CD4-positive, alpha-beta T cell (primary cell): ENCODE measurements at regions of chr11 and their contacts with region 1.

Region 1: GRCh38 chr11:55673860-55674259 is 11.9 kb downstream of the OR4C6 start:
- DNase-seq: no peak
- ATAC-seq: no peak
- H3K4me3 ChIP-seq: no peak overlapping the region
- H3K4me3 Mint-ChIP-seq: no peak overlapping the region
- H3K27ac ChIP-seq: no peak overlapping the region
- H3K27ac Mint-ChIP-seq: no peak overlapping the region
- H3K4me1 ChIP-seq: no peaks in the 10 kb centered on the region
- H3K4me1 Mint-ChIP-seq: no peaks in the 10 kb centered on the region
- H3K27me3 ChIP-seq: no peaks in the 10 kb centered on the region
- H3K27me3 Mint-ChIP-seq: no peaks in the 10 kb centered on the region
- CTCF ChIP-seq: no peak

Region 2: GRCh38 chr11:55457641-55458040 is 216.2 kb before region 1 on chr11:
- CTCF ChIA-PET with region 1: no interaction called
- POLR2A ChIA-PET with region 1: no interaction called
- intact Hi-C with region 1: no loop called
- DNase-seq: no peak
- ATAC-seq: no peak
- H3K4me3 ChIP-seq: no peak overlapping the region
- H3K4me3 Mint-ChIP-seq: no peak overlapping the region
- H3K27ac ChIP-seq: no peak overlapping the region
- H3K27ac Mint-ChIP-seq: no peak overlapping the region
- H3K4me1 ChIP-seq: no peaks in the 10 kb centered on the region
- H3K4me1 Mint-ChIP-seq: no peaks in the 10 kb centered on the region
- H3K27me3 ChIP-seq: no peaks in the 10 kb centered on the region
- H3K27me3 Mint-ChIP-seq: no peaks in the 10 kb centered on the region
- CTCF ChIP-seq: no peak

Region 3: GRCh38 chr11:55661901-55662300 is 12.0 kb before region 1 on chr11 and contains the start of gene OR4C6:
- CTCF ChIA-PET with region 1: no interaction called
- POLR2A ChIA-PET with region 1: no interaction called
- intact Hi-C with region 1: loop called in 1 of 2 experiments (anchors 1 kb)
- DNase-seq: no peak
- ATAC-seq: no peak
- H3K4me3 ChIP-seq: no peak within 1 kb of the TSS
- H3K4me3 Mint-ChIP-seq: no peak within 1 kb of the TSS
- H3K27ac ChIP-seq: no peak within 1 kb of the TSS
- H3K27ac Mint-ChIP-seq: no peak within 1 kb of the TSS
- H3K4me1 ChIP-seq: no peaks in the 10 kb centered on the region
- H3K4me1 Mint-ChIP-seq: no peaks in the 10 kb centered on the region
- H3K27me3 ChIP-seq: no peaks in the 10 kb centered on the region
- H3K27me3 Mint-ChIP-seq: no peaks in the 10 kb centered on the region
- CTCF ChIP-seq: no peak
- total RNA-seq, gene OR4C6: not detected